B cell (primary cell): ENCODE measurements at regions of chrX and their contacts with region 1.

Region 1: GRCh38 chrX:107716816-107717700 is 58.5 kb downstream of the TSC22D3 start:
- DNase-seq: peak; percentile 94
- ATAC-seq: peak; percentile 60
- H3K4me3 ChIP-seq: peak overlapping the region; percentile 59 to 96 (median 86)
- H3K4me3 Mint-ChIP-seq: peak overlapping the region; percentile 97
- H3K27ac ChIP-seq: peak overlapping the region; percentile 99
- H3K27ac Mint-ChIP-seq: peak overlapping the region; percentile 100
- H3K4me1 ChIP-seq: peaks cover 63 to 85% of the 10 kb centered on the region in 2 donors
- H3K4me1 Mint-ChIP-seq: peaks cover 75% of the 10 kb centered on the region
- H3K27me3 ChIP-seq: no peaks in the 10 kb centered on the region
- H3K27me3 Mint-ChIP-seq: no peaks in the 10 kb centered on the region
- CTCF ChIP-seq: no peak

Region 2: GRCh38 chrX:107420571-107420970 is 296.5 kb before region 1 on chrX:
- CTCF ChIA-PET with region 1: no interaction called
- POLR2A ChIA-PET with region 1: no interaction called
- intact Hi-C with region 1: no loop called
- DNase-seq: no peak
- ATAC-seq: no peak
- H3K4me3 ChIP-seq: no peak overlapping the region
- H3K4me3 Mint-ChIP-seq: no peak overlapping the region
- H3K27ac ChIP-seq: no peak overlapping the region
- H3K27ac Mint-ChIP-seq: no peak overlapping the region
- H3K4me1 ChIP-seq: peaks cover 0 to 3% of the 10 kb centered on the region in 2 donors
- H3K4me1 Mint-ChIP-seq: peaks cover 5% of the 10 kb centered on the region
- H3K27me3 ChIP-seq: peaks cover 0 to 2% (median 0%) of the 10 kb centered on the region in 4 experiments
- H3K27me3 Mint-ChIP-seq: peaks cover 8% of the 10 kb centered on the region
- CTCF ChIP-seq: no peak

Region 3: DNA sequence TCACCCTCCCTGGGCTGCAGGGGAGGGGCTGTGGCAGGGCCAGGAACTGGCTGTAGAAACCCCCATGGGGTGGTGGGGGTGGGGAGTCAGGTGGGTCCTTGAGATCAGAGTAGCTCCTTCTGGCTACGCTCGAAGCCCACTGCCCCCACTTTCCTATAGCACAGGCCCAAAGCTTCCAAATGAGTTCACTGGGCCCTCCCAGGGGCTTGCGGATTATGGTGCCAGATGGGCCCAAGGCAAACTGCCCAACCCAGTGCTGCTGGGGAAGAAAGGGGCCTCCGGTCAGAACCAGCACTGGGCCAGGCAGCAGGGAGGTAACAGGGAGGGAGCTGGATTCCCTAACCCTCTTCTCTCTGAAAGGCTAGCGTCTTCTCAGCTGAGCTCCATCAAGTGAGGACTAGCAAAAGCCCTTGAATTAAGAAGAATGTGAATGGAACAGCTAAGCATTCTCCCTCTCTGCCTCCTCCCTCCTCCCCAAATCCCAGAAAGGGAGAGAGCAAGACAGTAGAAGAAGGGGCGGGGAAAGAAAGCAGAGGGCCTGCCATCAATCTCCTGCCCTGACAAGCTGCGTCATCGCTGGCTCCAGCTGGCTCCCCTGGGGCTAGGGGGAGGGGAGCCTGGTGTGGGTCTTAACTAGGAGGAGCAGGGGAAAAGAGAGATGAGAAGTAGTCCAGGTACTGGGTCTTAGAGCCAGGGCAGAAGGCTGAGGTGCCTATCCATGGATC is 232.9 kb before region 1 on chrX:
- CTCF ChIA-PET with region 1: no interaction called
- POLR2A ChIA-PET with region 1: no interaction called
- intact Hi-C with region 1: no loop called
- DNase-seq: no peak
- ATAC-seq: no peak
- H3K4me3 ChIP-seq: no peak overlapping the region
- H3K4me3 Mint-ChIP-seq: no peak overlapping the region
- H3K27ac ChIP-seq: no peak overlapping the region
- H3K27ac Mint-ChIP-seq: no peak overlapping the region
- H3K4me1 ChIP-seq: no peaks in the 10 kb centered on the region
- H3K4me1 Mint-ChIP-seq: peaks cover 1% of the 10 kb centered on the region
- H3K27me3 ChIP-seq: no peaks in the 10 kb centered on the region
- H3K27me3 Mint-ChIP-seq: no peaks in the 10 kb centered on the region
- CTCF ChIP-seq: no peak

Region 4: GRCh38 chrX:107654872-107655761 is 61.9 kb before region 1 on chrX:
- CTCF ChIA-PET with region 1: interaction called, 72 read pairs
- POLR2A ChIA-PET with region 1: interaction called, 4 read pairs
- intact Hi-C with region 1: loop called (anchors 5 kb)
- DNase-seq: peak; percentile 74
- ATAC-seq: peak; percentile 85
- H3K4me3 ChIP-seq: no peak overlapping the region
- H3K4me3 Mint-ChIP-seq: no peak overlapping the region
- H3K27ac ChIP-seq: no peak overlapping the region
- H3K27ac Mint-ChIP-seq: peak overlapping the region; percentile 26
- H3K4me1 ChIP-seq: peaks cover 7% of the 10 kb centered on the region in 2 donors
- H3K4me1 Mint-ChIP-seq: peaks cover 9% of the 10 kb centered on the region
- H3K27me3 ChIP-seq: no peaks in the 10 kb centered on the region
- H3K27me3 Mint-ChIP-seq: no peaks in the 10 kb centered on the region
- CTCF ChIP-seq: peak; percentile 78

Region 5: GRCh38 chrX:107741404-107741790 is 24.3 kb after region 1 on chrX:
- CTCF ChIA-PET with region 1: interaction called, 20 read pairs
- POLR2A ChIA-PET with region 1: interaction called, 29 read pairs
- intact Hi-C with region 1: loop called (anchors 2 kb)
- DNase-seq: no peak
- ATAC-seq: no peak
- H3K4me3 ChIP-seq: peak overlapping the region in 4 of 5 experiments; percentile 5 to 37 (median 18)
- H3K4me3 Mint-ChIP-seq: peak overlapping the region; percentile 88
- H3K27ac ChIP-seq: peak overlapping the region; percentile 62 to 68
- H3K27ac Mint-ChIP-seq: peak overlapping the region; percentile 98
- H3K4me1 ChIP-seq: peaks cover 14 to 19% of the 10 kb centered on the region in 2 donors
- H3K4me1 Mint-ChIP-seq: peaks cover 15% of the 10 kb centered on the region
- H3K27me3 ChIP-seq: no peaks in the 10 kb centered on the region
- H3K27me3 Mint-ChIP-seq: no peaks in the 10 kb centered on the region
- CTCF ChIP-seq: no peak